ENCODE measurements at regions of chrX and their contacts with region 1.

Region 1: DNA sequence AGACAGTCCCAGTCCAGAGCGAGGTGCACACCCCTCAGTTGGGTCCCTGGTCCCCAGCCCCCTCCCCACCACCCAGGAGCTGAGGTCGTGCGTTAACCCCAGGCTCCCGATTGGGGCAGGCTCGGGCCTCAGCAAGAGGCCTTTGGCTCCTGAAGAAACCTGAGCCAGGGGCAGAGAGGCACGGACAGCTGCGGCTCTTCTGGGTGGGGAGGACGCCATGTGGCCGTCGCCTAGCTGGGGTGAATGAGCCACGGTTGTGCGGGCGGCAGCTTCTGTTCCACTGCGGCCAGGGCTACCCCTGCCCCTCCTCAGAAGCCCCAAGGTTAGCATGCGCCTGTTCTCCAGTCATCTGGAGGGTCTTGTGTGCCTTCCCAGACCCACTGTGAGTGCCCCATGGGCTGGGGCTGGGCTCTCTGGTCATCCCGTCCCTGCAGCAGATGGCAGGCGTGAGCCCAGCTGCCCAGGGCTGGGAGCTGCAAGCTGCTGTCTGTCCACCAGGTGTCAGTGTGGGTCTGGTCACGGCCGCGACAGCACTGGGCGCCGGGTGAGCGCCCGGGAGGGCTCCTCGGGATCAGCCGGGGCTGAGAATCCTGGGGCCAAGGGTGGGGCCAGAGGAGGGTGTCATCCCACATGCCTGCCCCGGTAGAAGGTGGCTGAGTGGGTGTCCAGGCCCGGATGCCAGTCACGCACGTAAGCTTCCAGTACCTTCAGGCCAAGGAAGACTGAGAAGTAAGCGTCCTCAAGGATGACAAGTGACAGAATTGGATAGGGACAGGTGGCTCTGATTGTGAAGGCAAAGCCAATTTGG is 21.9 kb downstream of the ATP2B3 start:
- DNase-seq: peak; percentile 60
- H3K4me3 Mint-ChIP-seq: no peak overlapping the region
- H3K27ac Mint-ChIP-seq: no peak overlapping the region
- H3K4me1 Mint-ChIP-seq: no peaks in the 10 kb centered on the region
- H3K27me3 Mint-ChIP-seq: no peaks in the 10 kb centered on the region

Region 2: DNA sequence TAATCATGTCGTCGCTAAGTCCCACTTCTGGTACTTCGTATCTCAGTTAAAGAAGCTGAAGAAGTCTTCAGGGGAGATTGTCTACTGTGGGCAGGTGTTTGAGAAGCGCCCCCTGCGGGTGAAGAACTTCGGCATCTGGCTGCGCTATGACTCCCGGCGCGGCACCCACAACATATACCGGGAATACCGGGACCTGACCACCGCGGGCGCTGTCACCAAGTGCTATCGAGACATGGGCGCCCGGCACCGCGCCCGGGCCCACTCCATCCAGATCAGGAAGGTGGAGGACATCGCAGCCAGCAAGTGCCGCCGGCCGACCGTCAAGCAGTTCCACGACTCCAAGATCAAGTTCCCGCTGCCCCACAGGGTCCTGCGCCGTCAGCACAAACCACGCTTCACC is 122.9 kb after region 1 on chrX:
- CTCF ChIA-PET with region 1: interaction called, 38 read pairs
- POLR2A ChIA-PET with region 1: no interaction called
- DNase-seq: peak; percentile 51
- H3K4me3 Mint-ChIP-seq: no peak overlapping the region
- H3K27ac Mint-ChIP-seq: no peak overlapping the region
- H3K4me1 Mint-ChIP-seq: peaks cover 4% of the 10 kb centered on the region
- H3K27me3 Mint-ChIP-seq: peaks cover 36% of the 10 kb centered on the region

Region 3: GRCh38 chrX:153687121-153688039 is 148.0 kb after region 1 on chrX and contains the start of gene SLC6A8:
- CTCF ChIA-PET with region 1: no interaction called
- POLR2A ChIA-PET with region 1: no interaction called
- DNase-seq: peak; percentile 39
- H3K4me3 Mint-ChIP-seq: peak within 1 kb of the TSS; percentile 58
- H3K27ac Mint-ChIP-seq: no peak within 1 kb of the TSS
- H3K4me1 Mint-ChIP-seq: no peaks in the 10 kb centered on the region
- H3K27me3 Mint-ChIP-seq: peaks cover 9% of the 10 kb centered on the region
- total RNA-seq, gene SLC6A8: 2.9 to 3.0 TPM

Region 4: DNA sequence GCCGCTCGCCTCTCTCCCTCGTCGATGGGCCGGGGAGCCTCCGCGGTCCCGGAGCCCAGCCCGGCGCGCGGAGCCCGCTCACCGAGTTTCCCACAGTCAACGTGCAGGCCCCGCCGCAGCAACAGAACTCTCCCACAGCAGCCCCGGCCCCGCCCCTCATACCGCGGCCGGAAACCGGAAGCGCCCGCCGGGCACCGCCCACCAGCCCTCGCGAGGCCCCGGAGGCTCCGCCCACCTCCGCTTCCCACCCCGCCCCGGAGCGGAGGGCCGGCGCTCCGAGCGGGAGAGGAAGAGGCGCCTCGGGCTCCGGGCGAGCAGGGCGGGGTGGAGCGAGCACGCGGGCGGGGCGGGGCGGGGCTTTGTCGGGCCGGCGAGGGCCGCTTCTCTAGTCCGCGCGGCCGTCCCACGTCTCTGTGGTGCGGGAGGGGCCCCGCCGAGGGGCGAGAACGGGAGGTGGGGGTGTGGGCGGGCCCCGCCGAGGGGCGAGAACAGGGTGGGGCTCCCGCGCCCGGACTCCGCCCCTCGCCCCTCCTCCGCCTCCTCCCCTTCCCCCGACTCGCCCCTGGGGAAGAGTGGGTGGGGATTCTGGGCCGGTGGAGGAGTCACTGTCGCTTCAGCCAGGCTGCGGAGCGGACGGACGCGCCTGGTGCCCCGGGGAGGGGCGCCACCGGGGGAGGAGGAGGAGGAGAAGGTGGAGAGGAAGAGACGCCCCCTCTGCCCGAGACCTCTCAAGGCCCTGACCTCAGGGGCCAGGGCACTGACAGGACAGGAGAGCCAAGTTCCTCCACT is 185.1 kb after region 1 on chrX and contains the starts of genes ABCD1 and BCAP31:
- CTCF ChIA-PET with region 1: no interaction called
- POLR2A ChIA-PET with region 1: no interaction called
- DNase-seq: peak; percentile 91
- H3K4me3 Mint-ChIP-seq: peak within 1 kb of the TSS; percentile 89
- H3K27ac Mint-ChIP-seq: peak within 1 kb of the TSS; percentile 84
- H3K4me1 Mint-ChIP-seq: peaks cover 29% of the 10 kb centered on the region
- H3K27me3 Mint-ChIP-seq: no peaks in the 10 kb centered on the region
- total RNA-seq, gene ABCD1: 16.5 to 17.6 TPM
- total RNA-seq, gene BCAP31: 162 TPM

Measured in activated CD4-positive, alpha-beta memory T cell treated with anti-CD3 and anti-CD28 coated beads, Interleukin-2, amount 10 ng/mL, durations not matched to agents 7 days and 5 days (primary cell).